GM12878 (cell line): ENCODE measurements at regions of chr14 and their contacts with region 1.

Region 1: GRCh38 chr14:61403411-61403810 is 82.0 kb downstream of the PRKCH start:
- DNase-seq: peak; percentile 61
- ATAC-seq: peak; percentile 86
- H3K4me3 ChIP-seq: no peak overlapping the region
- H3K27ac ChIP-seq: peak overlapping the region; percentile 89
- H3K4me1 ChIP-seq: peaks cover 17% of the 10 kb centered on the region
- H3K27me3 ChIP-seq: no peaks in the 10 kb centered on the region
- CTCF ChIP-seq: no peak
- EP300 ChIP-seq: no peak
- POLR2A ChIP-seq: peak; percentile 35; the same call in 1 of the 2 replicates
- RAD21 ChIP-seq: no peak

Region 2: GRCh38 chr14:61051051-61051450 is 352.4 kb before region 1 on chr14:
- CTCF ChIA-PET with region 1: no interaction called
- POLR2A ChIA-PET with region 1: no interaction called
- RAD21 ChIA-PET with region 1: no interaction called
- SMC1A ChIA-PET with region 1: no interaction called
- in situ Hi-C with region 1: no loop called
- intact Hi-C with region 1: no loop called
- DNase-seq: no peak
- ATAC-seq: no peak
- H3K4me3 ChIP-seq: no peak overlapping the region
- H3K27ac ChIP-seq: no peak overlapping the region
- H3K4me1 ChIP-seq: no peaks in the 10 kb centered on the region
- H3K27me3 ChIP-seq: no peaks in the 10 kb centered on the region
- CTCF ChIP-seq: no peak
- EP300 ChIP-seq: no peak
- POLR2A ChIP-seq: no peak
- RAD21 ChIP-seq: no peak

Region 3: GRCh38 chr14:61103481-61104339 is 299.7 kb before region 1 on chr14:
- CTCF ChIA-PET with region 1: no interaction called
- POLR2A ChIA-PET with region 1: no interaction called
- RAD21 ChIA-PET with region 1: no interaction called
- SMC1A ChIA-PET with region 1: no interaction called
- in situ Hi-C with region 1: no loop called
- intact Hi-C with region 1: no loop called
- DNase-seq: no peak
- ATAC-seq: peak; percentile 89
- H3K4me3 ChIP-seq: no peak overlapping the region
- H3K27ac ChIP-seq: peak overlapping the region; percentile 50
- H3K4me1 ChIP-seq: peaks cover 31% of the 10 kb centered on the region
- H3K27me3 ChIP-seq: no peaks in the 10 kb centered on the region
- CTCF ChIP-seq: no peak
- EP300 ChIP-seq: no peak
- POLR2A ChIP-seq: no peak
- RAD21 ChIP-seq: no peak

Region 4: DNA sequence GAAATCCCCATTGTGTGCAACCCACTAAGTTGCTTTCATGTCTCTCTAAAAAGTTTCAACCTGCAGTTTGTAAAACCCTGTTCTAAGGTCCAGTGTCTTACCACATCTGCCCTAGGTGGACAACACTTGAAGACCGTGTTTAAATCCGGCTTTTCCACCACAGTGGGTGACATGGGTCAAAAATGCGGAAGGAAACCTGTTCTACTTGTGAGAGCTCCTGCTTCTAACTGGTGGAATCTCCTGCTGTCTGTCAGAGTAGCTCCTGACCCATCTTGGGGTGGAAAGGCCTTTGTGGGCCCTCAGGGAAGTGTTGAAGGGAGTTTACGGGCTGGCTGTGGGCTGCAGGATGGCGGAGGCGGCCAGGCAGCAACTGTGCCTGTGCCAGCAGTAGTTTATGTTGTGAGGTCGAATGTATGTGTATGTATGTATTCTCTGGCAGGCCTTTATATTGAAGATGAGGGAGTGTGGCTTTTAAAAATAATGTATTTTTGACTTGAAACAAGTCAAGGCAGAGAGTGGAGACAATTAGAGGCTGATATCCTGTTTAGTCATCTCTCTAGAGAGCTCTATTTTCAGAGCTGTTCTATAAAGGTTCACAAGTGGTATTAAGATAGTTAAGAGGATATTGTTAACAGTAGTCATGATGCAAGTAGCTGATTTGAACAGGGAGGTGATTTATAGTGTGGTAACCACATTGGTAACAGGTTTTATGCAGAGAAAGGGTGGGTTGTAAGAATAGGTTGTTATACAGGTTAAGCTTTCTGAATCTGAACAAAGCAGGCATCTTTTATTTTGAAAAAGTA is 15.0 kb before region 1 on chr14:
- CTCF ChIA-PET with region 1: interaction called, 12 read pairs
- POLR2A ChIA-PET with region 1: interaction called, 7 read pairs
- RAD21 ChIA-PET with region 1: interaction called, 22 read pairs
- SMC1A ChIA-PET with region 1: interaction called, 84 read pairs
- in situ Hi-C with region 1: no loop called
- intact Hi-C with region 1: no loop called
- DNase-seq: peak; percentile 86
- ATAC-seq: peak; percentile 74
- H3K4me3 ChIP-seq: peak overlapping the region; percentile 24; the same call in 1 of the 2 replicates
- H3K27ac ChIP-seq: peak overlapping the region; percentile 99
- H3K4me1 ChIP-seq: peaks cover 76% of the 10 kb centered on the region
- H3K27me3 ChIP-seq: no peaks in the 10 kb centered on the region
- CTCF ChIP-seq: no peak
- EP300 ChIP-seq: peak; percentile 90 to 93
- POLR2A ChIP-seq: peak; percentile 63
- RAD21 ChIP-seq: no peak

Region 5: GRCh38 chr14:61430066-61430739 is 26.8 kb after region 1 on chr14:
- CTCF ChIA-PET with region 1: interaction called, 5 read pairs
- POLR2A ChIA-PET with region 1: interaction called, 7 read pairs
- RAD21 ChIA-PET with region 1: interaction called, 7 read pairs
- SMC1A ChIA-PET with region 1: interaction called, 53 read pairs
- in situ Hi-C with region 1: no loop called
- intact Hi-C with region 1: no loop called
- DNase-seq: no peak
- ATAC-seq: peak; percentile 61
- H3K4me3 ChIP-seq: no peak overlapping the region
- H3K27ac ChIP-seq: peak overlapping the region; percentile 25; the same call in 1 of the 2 replicates
- H3K4me1 ChIP-seq: peaks cover 15% of the 10 kb centered on the region
- H3K27me3 ChIP-seq: no peaks in the 10 kb centered on the region
- CTCF ChIP-seq: no peak
- EP300 ChIP-seq: no peak
- POLR2A ChIP-seq: no peak
- RAD21 ChIP-seq: no peak

Region 6: GRCh38 chr14:61444215-61444768 is 40.9 kb after region 1 on chr14:
- CTCF ChIA-PET with region 1: interaction called, 4 read pairs
- POLR2A ChIA-PET with region 1: interaction called, 5 read pairs
- RAD21 ChIA-PET with region 1: interaction called, 11 read pairs
- SMC1A ChIA-PET with region 1: interaction called, 53 read pairs
- in situ Hi-C with region 1: no loop called
- intact Hi-C with region 1: no loop called
- DNase-seq: no peak
- ATAC-seq: peak; percentile 91
- H3K4me3 ChIP-seq: no peak overlapping the region; the same call in 1 of the 2 replicates
- H3K27ac ChIP-seq: peak overlapping the region; percentile 74
- H3K4me1 ChIP-seq: peaks cover 35% of the 10 kb centered on the region
- H3K27me3 ChIP-seq: no peaks in the 10 kb centered on the region
- CTCF ChIP-seq: no peak
- EP300 ChIP-seq: peak; percentile 41 to 61; a peak in 2 of 4 replicates
- POLR2A ChIP-seq: no peak
- RAD21 ChIP-seq: no peak